ENCODE measurements at regions of chr1 and their contacts with region 1.

Region 1: DNA sequence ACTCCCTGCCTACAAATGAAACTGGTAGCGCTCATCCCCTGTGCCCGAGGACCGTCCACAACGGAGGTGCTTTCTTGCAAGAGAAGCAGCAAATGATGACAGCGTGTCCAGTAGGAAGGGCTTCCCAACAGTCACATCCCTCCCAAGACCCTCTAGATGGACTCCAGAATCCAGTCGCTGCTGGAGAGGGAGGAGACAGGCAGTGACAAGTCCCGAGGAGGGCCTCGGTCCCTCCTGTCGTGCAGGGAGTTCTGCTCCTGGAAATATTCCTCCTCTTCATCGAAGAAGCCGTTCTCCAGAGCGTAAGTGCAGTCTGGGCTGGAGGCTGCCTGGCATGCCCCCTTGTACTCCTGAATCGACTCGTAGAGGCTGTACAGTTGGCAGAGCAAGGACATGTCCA is 20.3 kb downstream of the FAM89A start:
- DNase-seq: no peak

Region 2: GRCh38 chr1:230958370-230958769 is 61.3 kb before region 1 on chr1:
- intact Hi-C with region 1: no loop called
- DNase-seq: no peak

Region 3: GRCh38 chr1:230986976-230987375 is 32.7 kb before region 1 on chr1:
- intact Hi-C with region 1: loop called in 1 of 2 experiments (anchors 2 kb)
- DNase-seq: no peak

Region 4: GRCh38 chr1:231211005-231211857 is 191.5 kb after region 1 on chr1:
- intact Hi-C with region 1: no loop called
- DNase-seq: peak; percentile 92